ENCODE measurements at regions of chr11 and their contacts with region 1.

Region 1: DNA sequence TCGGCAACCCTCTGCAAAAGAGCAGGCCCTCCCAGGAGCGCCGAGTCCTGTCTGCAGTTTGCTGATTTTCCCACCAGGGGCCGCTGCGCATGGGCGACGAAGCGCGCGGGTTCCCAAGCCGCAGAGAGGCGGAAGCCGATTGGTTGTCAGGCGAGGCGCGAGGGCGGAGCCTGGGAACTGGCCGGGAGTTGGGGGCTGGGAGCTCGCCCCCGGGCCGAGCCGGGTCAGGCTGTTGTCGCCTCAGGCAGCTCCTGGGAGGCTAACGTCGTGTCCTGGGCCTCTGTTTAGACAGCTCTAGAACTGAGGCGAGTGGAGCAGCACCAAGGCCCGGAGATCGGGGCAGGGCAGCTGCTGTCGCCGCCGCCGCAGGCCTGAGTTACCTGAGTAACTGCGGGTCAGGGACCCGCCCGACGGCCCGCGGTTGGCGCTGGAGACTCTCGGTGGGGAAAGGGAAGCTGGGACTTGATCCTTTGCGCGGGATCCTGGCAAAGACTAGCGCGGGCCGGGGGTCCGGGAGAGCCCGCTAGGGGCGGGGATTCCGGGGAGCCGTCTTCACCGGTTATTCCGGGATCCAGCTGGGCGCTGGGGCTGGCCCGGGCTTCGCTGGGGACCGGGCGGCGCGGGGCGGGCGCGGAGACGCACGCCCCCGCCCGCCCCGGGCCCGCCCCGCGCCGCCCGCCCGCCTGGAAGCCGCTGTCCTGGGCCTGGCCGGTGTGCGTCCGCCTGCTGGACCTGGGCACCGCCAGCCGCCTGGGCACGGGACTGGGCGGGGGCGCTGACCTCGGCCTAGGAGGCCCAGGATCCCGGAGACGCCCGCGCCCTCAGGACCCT is at the start of gene STIM1:
- DNase-seq: peak; percentile 95
- H3K4me3 ChIP-seq: peak within 1 kb of the TSS; percentile 87 to 89
- H3K27ac ChIP-seq: peak within 1 kb of the TSS; percentile 82 to 88
- H3K4me1 ChIP-seq: peaks cover 27 to 28% of the 10 kb centered on the region in 2 experiments; a peak in 3 of 4 replicates
- H3K27me3 ChIP-seq: no peaks in the 10 kb centered on the region
- CTCF ChIP-seq: peak; percentile 83
- EP300 ChIP-seq: peak; percentile 19 to 25; a peak in 2 of 4 replicates
- RAD21 ChIP-seq: peak; percentile 85
- polyA plus RNA-seq, gene STIM1: 21.8 and 29.5 TPM in 2 replicates

Region 2: DNA sequence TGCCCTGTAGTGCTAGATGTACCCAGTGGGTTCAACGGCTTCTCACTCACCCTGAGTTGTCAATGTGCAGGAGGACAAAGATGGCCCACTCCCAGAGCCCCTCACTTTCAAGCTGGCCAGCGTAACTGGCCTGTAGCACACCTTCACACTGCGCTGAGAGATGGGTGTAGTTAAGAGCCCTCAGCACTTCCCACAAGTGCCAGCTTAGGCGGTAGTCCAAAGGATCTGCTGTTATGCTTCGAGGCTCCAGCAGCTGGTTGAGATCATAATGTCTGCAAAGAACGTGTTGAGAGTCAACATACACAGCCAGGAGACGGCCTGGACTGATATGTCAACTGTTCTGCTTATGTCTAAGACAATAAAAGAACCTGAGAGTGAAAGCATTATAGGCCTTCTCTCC is 169.3 kb before region 1 on chr11:
- CTCF ChIA-PET with region 1: no interaction called
- POLR2A ChIA-PET with region 1: no interaction called
- DNase-seq: no peak
- H3K4me3 ChIP-seq: no peak overlapping the region
- H3K27ac ChIP-seq: no peak overlapping the region
- H3K4me1 ChIP-seq: no peaks in the 10 kb centered on the region
- H3K27me3 ChIP-seq: no peaks in the 10 kb centered on the region
- CTCF ChIP-seq: no peak
- EP300 ChIP-seq: no peak
- RAD21 ChIP-seq: no peak

Region 3: DNA sequence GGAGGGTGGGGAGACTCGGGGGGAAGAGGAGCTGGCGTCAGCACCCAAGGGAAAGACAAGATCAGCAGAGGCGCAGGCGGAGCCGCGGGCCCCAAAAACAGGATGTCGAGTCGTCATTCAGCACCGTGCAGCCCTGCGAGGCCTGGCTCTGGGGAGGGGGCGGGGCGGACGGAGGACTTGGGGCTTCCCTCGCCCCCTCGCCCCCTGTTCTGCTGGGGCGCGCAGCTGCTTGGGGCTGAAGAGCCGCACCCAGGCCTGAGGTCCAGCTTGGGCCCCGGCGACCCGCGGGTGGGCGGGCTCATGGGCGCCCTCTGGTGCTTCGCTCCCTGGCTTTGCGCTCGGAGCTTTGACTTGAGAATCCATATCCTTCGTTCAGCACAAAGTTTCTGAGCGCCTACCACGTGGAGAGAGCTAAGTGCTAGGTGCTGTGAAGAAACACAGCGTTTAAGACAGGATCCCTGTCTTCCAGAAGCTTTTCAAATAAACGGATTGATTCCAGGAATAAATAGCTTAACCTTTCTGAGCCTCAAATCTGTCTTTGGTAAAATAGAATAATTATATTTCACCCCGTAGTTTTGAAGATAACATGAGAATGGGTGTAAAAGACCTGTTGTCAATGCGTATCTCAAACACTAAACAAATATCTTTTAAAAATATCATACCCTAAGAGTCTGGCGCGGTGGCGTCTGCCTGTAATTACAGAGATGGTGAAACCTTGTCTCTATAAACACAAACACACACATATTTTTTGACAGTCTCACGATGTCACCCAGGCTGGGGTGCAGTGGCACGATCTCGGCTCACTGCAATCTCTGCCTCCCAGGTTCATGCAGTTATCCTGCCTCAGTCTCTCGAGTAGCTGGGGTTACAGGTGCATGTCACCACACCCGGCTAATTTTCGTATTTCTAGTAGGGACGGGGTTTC is 13.5 kb before region 1 on chr11:
- CTCF ChIA-PET with region 1: interaction called, 134 read pairs
- POLR2A ChIA-PET with region 1: interaction called, 12 read pairs
- DNase-seq: peak; percentile 87
- H3K4me3 ChIP-seq: peak overlapping the region; percentile 67 to 71
- H3K27ac ChIP-seq: peak overlapping the region; percentile 82 to 84
- H3K4me1 ChIP-seq: peaks cover 5 to 17% of the 10 kb centered on the region in 2 experiments; a peak in 2 of 4 replicates
- H3K27me3 ChIP-seq: no peaks in the 10 kb centered on the region
- CTCF ChIP-seq: peak; percentile 80
- EP300 ChIP-seq: no peak
- RAD21 ChIP-seq: peak; percentile 50

Region 4: GRCh38 chr11:3902441-3902840 is 47.2 kb after region 1 on chr11:
- CTCF ChIA-PET with region 1: interaction called, 11 read pairs
- POLR2A ChIA-PET with region 1: no interaction called
- DNase-seq: no peak
- H3K4me3 ChIP-seq: no peak overlapping the region
- H3K27ac ChIP-seq: no peak overlapping the region
- H3K4me1 ChIP-seq: peaks cover 9 to 12% of the 10 kb centered on the region in 2 experiments; a peak in 2 of 4 replicates
- H3K27me3 ChIP-seq: no peaks in the 10 kb centered on the region
- CTCF ChIP-seq: no peak
- EP300 ChIP-seq: no peak
- RAD21 ChIP-seq: no peak

Region 5: DNA sequence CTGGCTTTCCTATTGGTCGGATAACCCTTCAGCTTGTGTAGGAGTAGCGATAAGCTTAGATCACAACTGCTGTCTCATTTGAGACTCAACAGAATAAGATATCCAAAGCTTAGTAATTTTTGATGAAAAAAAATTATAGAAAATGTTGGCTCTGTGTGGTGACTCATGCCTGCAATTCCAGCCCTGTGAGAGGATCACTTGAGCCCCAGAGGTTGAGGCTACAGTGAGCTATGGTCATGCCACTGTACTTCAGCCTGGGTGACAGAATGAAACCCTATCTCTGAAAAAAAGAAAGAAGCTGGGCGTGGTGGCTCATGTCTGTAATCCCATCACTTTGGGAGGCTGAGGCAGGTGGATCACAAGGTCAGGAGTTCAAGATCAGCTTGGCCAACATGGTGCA is 183.8 kb after region 1 on chr11:
- CTCF ChIA-PET with region 1: interaction called, 13 read pairs
- POLR2A ChIA-PET with region 1: no interaction called
- DNase-seq: no peak
- H3K4me3 ChIP-seq: no peak overlapping the region
- H3K27ac ChIP-seq: no peak overlapping the region
- H3K4me1 ChIP-seq: peaks cover 0 to 4% of the 10 kb centered on the region in 2 experiments; a peak in 1 of 4 replicates
- H3K27me3 ChIP-seq: no peaks in the 10 kb centered on the region
- CTCF ChIP-seq: no peak
- EP300 ChIP-seq: no peak
- RAD21 ChIP-seq: no peak

Region 6: GRCh38 chr11:4087551-4087950 is 232.4 kb after region 1 on chr11:
- CTCF ChIA-PET with region 1: interaction called, 10 read pairs
- POLR2A ChIA-PET with region 1: no interaction called
- DNase-seq: no peak
- H3K4me3 ChIP-seq: no peak overlapping the region
- H3K27ac ChIP-seq: no peak overlapping the region
- H3K4me1 ChIP-seq: no peaks in the 10 kb centered on the region
- H3K27me3 ChIP-seq: no peaks in the 10 kb centered on the region
- CTCF ChIP-seq: peak; percentile 41
- EP300 ChIP-seq: no peak
- RAD21 ChIP-seq: no peak

Measured in SK-N-SH (cell line).